Activated CD4-positive, alpha-beta T cell treated with anti-CD3 and anti-CD28 coated beads, Interleukin-2, amount 10 ng/mL, durations not matched to agents 24 days and 14 days (primary cell): ENCODE measurements at regions of chr7 and their contacts with region 1.

Region 1: DNA sequence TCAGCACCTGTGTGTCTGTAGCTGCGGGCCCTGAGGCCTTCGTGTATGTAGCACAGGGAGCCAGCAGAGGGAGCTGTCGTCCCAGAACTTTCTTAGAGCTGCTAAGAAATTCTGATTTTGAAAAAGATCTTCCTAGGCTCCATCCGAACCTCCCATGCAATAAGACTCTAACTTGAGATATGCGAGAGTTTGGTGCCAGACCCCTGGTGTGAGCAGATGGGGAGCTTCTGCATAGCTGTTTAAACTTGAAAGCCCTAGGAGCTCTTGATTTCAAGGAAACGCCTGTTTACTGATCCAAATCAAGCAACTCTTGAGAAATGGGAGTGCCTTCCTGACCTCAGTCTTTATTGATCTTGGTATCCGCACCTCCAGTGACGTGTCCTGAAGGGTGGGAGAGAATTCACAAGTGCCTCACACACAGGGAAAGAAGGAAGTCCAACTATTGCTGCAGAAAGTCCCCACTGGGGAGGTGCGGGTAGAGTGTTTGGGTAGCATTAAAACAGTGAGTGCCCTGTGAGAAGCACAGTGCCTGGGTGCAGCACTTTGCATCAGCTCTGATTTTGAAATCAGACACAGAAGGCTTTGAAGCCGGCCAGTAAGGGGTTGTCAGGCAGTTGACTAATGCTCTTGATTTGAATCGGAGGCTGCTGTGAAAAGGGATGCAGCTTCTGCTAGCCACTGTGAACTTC is 66.4 kb upstream of the STRIP2 start:
- DNase-seq: peak; percentile 93
- H3K4me3 Mint-ChIP-seq: peak overlapping the region; percentile 73
- H3K27ac Mint-ChIP-seq: peak overlapping the region; percentile 89
- H3K4me1 Mint-ChIP-seq: peaks cover 37% of the 10 kb centered on the region
- H3K27me3 Mint-ChIP-seq: no peaks in the 10 kb centered on the region

Region 2: GRCh38 chr7:129218514-129219062 is 149.3 kb before region 1 on chr7:
- intact Hi-C with region 1: no loop called
- DNase-seq: peak; percentile 93
- H3K4me3 Mint-ChIP-seq: no peak overlapping the region
- H3K27ac Mint-ChIP-seq: no peak overlapping the region
- H3K4me1 Mint-ChIP-seq: peaks cover 11% of the 10 kb centered on the region
- H3K27me3 Mint-ChIP-seq: no peaks in the 10 kb centered on the region

Region 3: GRCh38 chr7:129401967-129402860 is 34.4 kb after region 1 on chr7:
- intact Hi-C with region 1: loop called (anchors 2 kb)
- DNase-seq: peak; percentile 73
- H3K4me3 Mint-ChIP-seq: no peak overlapping the region
- H3K27ac Mint-ChIP-seq: peak overlapping the region; percentile 6
- H3K4me1 Mint-ChIP-seq: peaks cover 20% of the 10 kb centered on the region
- H3K27me3 Mint-ChIP-seq: no peaks in the 10 kb centered on the region

Region 4: DNA sequence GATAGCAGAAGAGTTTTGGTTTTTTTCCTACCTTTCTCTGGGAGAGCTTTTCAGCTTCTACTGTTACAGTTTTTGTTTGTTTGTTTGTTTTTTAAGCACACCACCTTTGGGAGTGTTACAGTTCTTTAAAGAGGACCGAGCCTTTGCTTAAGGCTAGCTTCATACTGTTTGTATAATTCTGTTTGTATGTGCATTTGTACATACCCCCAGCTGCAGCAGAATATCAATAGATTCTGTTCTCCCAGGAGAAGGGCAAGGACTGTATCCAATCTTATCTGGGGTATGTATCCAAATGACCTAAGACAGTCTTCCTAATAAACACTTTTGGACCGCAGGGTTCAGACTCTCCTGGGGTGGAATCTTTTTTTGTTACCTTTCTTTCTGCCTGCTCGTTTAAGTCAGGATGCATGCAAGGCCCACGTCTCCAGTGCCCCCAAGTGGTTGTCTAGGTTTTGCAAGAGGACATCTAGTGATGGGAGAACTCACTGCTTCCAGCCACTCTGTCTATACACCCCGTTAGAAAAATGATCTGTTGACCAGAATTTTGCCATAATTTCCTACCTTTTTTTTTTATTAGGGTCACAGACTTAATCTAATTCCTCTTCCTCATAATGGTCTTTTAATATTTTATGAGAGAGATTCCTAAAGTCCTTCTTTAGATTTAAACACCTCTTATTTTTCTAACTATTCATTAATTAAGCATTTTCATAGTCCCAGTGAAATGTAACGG is 267.6 kb after region 1 on chr7:
- intact Hi-C with region 1: loop called (anchors 1 kb)
- DNase-seq: peak; percentile 91
- H3K4me3 Mint-ChIP-seq: no peak overlapping the region
- H3K27ac Mint-ChIP-seq: peak overlapping the region; percentile 9
- H3K4me1 Mint-ChIP-seq: peaks cover 19% of the 10 kb centered on the region
- H3K27me3 Mint-ChIP-seq: no peaks in the 10 kb centered on the region